H1 (cell line): ENCODE measurements at regions of chr22 and their contacts with region 1.

Region 1: DNA sequence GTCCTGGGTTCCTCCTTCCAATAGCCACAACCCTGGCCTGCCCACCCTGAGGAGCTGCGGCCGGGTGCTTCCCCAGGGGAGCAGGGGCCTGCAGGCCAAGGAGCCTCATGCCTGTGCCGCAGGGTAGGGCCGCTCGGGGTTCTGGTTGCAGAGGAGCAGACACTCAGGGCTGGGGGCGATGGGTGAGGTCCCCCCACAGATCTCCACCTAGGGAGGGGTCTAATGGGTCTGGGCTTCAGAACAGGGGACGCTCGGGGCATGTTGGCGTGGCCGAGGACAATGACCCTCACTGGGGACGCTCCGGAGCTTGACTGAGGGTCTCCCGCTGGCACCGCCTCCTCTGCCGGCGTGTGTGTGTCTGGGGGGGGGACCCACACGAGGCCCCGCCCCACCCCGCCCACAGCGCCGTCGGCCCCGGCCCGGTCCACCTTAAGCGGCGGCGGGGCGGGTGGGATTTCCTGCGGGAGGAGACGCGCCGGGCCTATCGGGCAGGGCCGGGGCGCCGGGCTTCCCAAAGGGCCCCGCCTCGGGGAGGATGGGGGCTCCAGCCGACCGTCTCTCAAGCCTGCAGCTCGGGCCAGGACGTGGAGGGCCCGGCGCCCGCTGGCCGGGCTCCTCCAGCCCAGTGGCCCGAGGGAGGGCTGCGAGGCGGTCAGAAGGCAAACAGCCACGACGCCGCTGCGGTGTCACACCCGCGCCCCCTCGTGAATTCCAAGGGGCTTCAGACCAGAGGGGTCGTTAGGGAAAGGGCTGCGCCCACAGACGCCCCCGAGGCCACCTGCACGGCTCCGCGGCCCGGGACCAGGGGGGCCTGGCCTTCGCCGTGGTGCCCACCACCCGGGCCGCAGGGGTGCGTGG is 636 bp upstream of the ZDHHC8 start:
- DNase-seq: peak in 1 of 2 experiments; percentile 82
- H3K4me3 ChIP-seq: peak overlapping the region; percentile 47 to 76 (median 54)
- H3K27ac ChIP-seq: no peak overlapping the region; the same call in 1 of the 2 replicates
- H3K4me1 ChIP-seq: peaks cover 0 to 12% (median 7%) of the 10 kb centered on the region in 4 experiments; a peak in 4 of 7 replicates
- H3K27me3 ChIP-seq: no peaks in the 10 kb centered on the region; a peak in 2 of 7 replicates
- CTCF ChIP-seq: no peak
- EP300 ChIP-seq: no peak
- POLR2A ChIP-seq: no peak
- RAD21 ChIP-seq: no peak

Region 2: GRCh38 chr22:20079745-20080444 is 51.1 kb before region 1 on chr22 and contains the start of gene DGCR8:
- CTCF ChIA-PET with region 1: interaction called, 18 read pairs
- POLR2A ChIA-PET with region 1: interaction called, 8 read pairs
- DNase-seq: peak; percentile 64 to 91
- H3K4me3 ChIP-seq: peak within 1 kb of the TSS; percentile 81 to 99 (median 92)
- H3K27ac ChIP-seq: peak within 1 kb of the TSS; percentile 79
- H3K4me1 ChIP-seq: peaks cover 3 to 19% (median 11%) of the 10 kb centered on the region in 4 experiments
- H3K27me3 ChIP-seq: no peaks in the 10 kb centered on the region
- CTCF ChIP-seq: 0 out of 4 replicates have a peak, but pooled peaks of 1 of the 3 experiments have one; percentile 3
- EP300 ChIP-seq: no peak; a peak in 1 of 3 replicates
- POLR2A ChIP-seq: peak; percentile 73 to 89
- RAD21 ChIP-seq: no peak
- total RNA-seq, gene DGCR8: 42.3 and 43.7 TPM in 2 replicates

Region 3: GRCh38 chr22:20102203-20102780 is 28.7 kb before region 1 on chr22:
- CTCF ChIA-PET with region 1: no interaction called
- POLR2A ChIA-PET with region 1: interaction called, 43 read pairs
- DNase-seq: no peak
- H3K4me3 ChIP-seq: no peak overlapping the region
- H3K27ac ChIP-seq: no peak overlapping the region
- H3K4me1 ChIP-seq: peaks cover 0 to 6% (median 0%) of the 10 kb centered on the region in 4 experiments; a peak in 3 of 7 replicates
- H3K27me3 ChIP-seq: no peaks in the 10 kb centered on the region
- CTCF ChIP-seq: peak; percentile 30 to 45 (median 32)
- EP300 ChIP-seq: no peak
- POLR2A ChIP-seq: no peak
- RAD21 ChIP-seq: no peak

Region 4: DNA sequence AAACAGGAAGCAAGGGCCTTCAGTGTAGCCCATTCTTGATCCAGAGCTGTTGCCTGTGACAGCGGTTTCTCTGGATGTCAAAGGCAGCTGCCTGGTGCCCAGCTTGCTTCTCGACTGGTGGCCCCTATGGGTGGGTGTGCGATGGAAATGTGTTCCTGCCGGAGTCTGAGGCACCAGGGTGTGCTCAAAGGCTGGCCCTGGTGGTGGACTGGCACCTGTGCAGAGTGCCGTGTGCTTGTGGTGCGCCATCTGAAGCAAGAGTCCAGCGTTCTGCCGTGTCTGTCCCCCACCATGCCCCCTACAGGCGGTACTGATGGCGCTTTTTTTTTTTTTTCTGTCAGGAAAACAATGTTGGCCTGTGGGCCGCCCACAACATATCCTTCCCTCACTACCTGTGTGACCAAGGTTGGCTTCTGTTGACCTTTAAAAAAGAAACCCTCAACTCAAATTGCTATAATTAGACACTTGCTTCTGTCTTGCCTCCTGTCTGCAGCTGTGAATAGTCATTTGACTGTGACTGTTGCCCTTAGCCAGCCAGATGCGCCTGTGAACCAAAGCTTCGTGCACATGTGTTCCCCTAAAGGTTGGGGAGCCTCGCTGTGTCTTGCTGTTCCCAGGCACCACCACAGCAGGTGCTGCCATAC is 19.8 kb before region 1 on chr22:
- CTCF ChIA-PET with region 1: interaction called, 6 read pairs
- POLR2A ChIA-PET with region 1: interaction called, 223 read pairs
- DNase-seq: no peak
- H3K4me3 ChIP-seq: no peak overlapping the region
- H3K27ac ChIP-seq: no peak overlapping the region
- H3K4me1 ChIP-seq: no peaks in the 10 kb centered on the region
- H3K27me3 ChIP-seq: no peaks in the 10 kb centered on the region
- CTCF ChIP-seq: peak; percentile 48 to 60 (median 57)
- EP300 ChIP-seq: no peak
- POLR2A ChIP-seq: no peak; a peak in 1 of 3 replicates
- RAD21 ChIP-seq: no peak

Region 5: DNA sequence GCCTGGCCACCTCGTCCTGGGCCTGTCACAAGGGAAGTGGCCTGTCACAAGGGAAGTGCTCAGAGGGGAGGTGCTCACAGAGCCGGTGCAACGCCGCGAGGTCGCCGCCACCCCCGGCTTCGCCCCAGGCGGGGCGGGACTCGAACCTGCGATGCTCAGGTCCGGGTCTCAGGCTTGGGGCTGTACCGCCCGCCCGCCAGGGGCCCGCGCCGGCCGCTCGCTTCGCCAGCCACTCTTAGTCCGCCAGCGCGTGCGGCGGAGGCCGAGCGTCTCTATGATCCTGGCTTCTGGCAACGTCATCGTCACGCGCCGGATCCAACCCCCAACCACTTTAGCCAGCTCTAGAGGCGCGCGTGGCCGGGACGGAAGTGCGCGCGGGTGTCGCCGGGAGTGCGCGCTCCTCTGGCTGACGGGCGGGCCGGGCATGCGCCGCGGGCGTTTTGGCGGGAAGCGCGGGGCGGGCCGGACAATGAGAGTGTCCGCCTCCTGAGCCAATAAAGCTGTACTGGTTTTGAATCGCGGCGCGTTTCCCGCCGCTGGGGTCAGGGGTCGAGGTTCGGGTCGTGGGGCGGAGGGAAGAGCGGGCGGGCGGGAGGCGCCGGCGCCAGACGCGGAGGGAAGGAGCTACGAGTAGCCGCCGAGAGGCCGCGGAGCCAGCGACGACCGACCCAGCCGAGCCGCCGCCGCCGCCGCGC is 13.9 kb before region 1 on chr22 and contains the start of gene TRMT2A:
- CTCF ChIA-PET with region 1: interaction called, 8 read pairs
- POLR2A ChIA-PET with region 1: interaction called, 223 read pairs
- DNase-seq: peak; percentile 92 to 98
- H3K4me3 ChIP-seq: peak within 1 kb of the TSS; percentile 89 to 99 (median 98)
- H3K27ac ChIP-seq: peak within 1 kb of the TSS; percentile 93
- H3K4me1 ChIP-seq: peaks cover 0 to 12% (median 5%) of the 10 kb centered on the region in 4 experiments; a peak in 5 of 7 replicates
- H3K27me3 ChIP-seq: no peaks in the 10 kb centered on the region
- CTCF ChIP-seq: peak; percentile 19 to 23 (median 23)
- EP300 ChIP-seq: peak in 1 of 2 experiments; percentile 3; a peak in 1 of 3 replicates
- POLR2A ChIP-seq: peak; percentile 22 to 44; a peak in 2 of 3 replicates
- RAD21 ChIP-seq: no peak
- total RNA-seq, gene TRMT2A: 44.9 and 47.9 TPM in 2 replicates

Region 6: DNA sequence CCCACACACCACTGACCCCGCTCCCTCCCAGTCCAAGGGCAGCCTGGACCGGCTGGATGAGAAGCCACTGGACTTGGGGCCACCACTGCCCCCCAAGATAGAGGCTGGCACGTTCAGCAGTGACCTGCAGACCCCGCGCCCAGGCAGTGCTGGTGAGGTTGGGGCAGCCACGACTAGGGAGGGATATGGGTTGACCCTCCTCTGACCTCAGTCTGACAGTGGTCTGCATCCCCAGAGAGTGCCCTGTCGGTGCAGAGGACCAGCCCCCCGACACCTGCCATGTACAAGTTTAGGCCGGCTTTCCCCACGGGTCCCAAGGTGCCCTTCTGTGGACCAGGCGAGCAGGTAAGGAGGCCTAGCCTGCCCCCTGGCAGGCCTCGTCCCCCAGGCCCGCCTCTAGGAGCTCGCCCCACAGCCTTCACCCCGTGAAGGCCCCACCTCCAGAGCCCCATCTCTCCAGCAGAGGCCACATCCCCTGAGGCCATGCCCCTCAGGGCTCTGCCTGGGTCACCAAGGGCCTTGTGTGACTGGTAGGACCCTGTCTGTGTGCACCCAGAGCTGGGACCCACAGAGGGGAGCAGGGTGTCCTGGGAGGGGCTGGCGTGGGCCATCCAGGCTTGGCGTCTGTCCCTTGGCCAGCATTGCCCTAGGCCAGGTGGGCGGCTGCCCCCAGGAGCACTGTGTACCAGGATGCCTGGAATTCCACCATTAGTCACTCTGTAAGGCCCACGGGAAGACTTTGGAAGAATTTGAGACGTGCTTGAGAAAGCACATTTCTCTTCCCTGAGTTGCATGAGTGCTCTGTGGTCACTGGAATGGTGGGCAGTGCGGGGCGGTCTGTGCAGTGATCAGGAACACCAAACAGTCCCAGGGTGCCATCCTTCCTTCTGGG is 10.5 kb after region 1 on chr22:
- CTCF ChIA-PET with region 1: interaction called, 3 read pairs
- POLR2A ChIA-PET with region 1: interaction called, 104 read pairs
- DNase-seq: no peak
- H3K4me3 ChIP-seq: no peak overlapping the region
- H3K27ac ChIP-seq: no peak overlapping the region
- H3K4me1 ChIP-seq: no peaks in the 10 kb centered on the region
- H3K27me3 ChIP-seq: no peaks in the 10 kb centered on the region
- CTCF ChIP-seq: no peak
- EP300 ChIP-seq: no peak
- POLR2A ChIP-seq: no peak
- RAD21 ChIP-seq: no peak

Region 7: GRCh38 chr22:20149257-20150250 is 18.6 kb after region 1 on chr22:
- CTCF ChIA-PET with region 1: interaction called, 3 read pairs
- POLR2A ChIA-PET with region 1: interaction called, 11 read pairs
- DNase-seq: no peak
- H3K4me3 ChIP-seq: no peak overlapping the region
- H3K27ac ChIP-seq: no peak overlapping the region
- H3K4me1 ChIP-seq: no peaks in the 10 kb centered on the region
- H3K27me3 ChIP-seq: no peaks in the 10 kb centered on the region
- CTCF ChIP-seq: no peak
- EP300 ChIP-seq: no peak
- POLR2A ChIP-seq: no peak
- RAD21 ChIP-seq: no peak